Aorta (tissue), 5 donors: ENCODE measurements at regions of chr2 and their contacts with region 1.

Region 1: DNA sequence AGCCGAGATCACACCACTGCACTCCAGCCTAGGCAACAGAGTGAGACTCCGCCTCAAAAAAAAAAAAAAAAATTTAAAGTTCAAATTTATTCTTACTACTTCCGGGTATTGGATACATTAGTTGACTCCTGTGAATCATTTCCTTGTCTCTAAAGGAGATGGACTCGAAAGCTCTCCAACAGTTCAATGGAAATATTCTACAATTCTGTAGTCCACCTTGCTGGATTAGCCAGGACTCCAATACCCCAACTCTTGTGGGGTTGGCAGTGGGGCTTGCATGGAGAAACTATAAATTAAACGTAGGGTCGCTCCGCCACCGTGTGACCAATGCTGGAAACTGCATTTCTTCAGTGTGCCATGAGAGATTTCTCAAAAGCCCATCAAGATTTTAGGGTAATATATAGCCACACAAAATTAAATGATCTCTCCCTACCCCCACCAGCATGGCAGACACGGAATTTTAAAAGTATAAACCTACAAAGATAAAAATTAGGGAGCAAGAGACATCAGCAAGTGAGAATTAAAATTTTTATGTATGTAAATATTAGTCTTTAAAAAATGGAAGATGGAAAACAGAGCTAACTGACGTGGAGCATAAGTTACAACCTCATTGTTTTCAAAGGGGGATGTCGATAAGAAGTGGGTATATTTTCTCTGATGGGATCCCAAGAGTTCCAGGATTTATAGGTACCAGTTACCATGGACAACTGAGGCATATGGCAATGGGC is 27.8 kb upstream of the GAREM2 start:
- DNase-seq: peak; percentile 59 to 79
- ATAC-seq: peak; percentile 54
- H3K4me3 ChIP-seq: no peak overlapping the region
- H3K27ac ChIP-seq: no peak overlapping the region
- H3K4me1 ChIP-seq: no peaks in the 10 kb centered on the region
- H3K27me3 ChIP-seq: no peaks in the 10 kb centered on the region

Region 2: DNA sequence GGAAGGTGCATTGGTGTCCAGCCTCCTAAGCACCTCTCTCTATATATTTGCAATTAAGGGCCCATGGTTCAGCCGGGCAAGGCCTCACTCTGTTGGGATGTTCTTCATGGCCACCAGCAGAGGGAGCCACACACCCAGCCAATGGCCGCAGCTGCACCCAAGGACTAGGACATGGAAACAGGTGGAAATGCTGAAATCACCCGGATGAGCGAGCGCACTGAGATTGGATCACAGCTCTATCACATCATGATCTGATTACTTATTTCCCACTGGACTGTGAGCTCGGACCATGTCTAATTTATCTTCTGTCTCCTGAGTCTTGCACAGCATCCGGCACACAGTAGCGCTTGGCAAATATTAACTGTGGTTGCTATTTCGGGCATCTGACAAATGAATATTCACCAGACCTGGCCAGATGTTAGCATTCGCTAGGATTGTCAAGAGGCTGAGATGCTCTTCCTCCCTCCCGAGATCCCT is 194.0 kb before region 1 on chr2:
- intact Hi-C with region 1: loop called (anchors 2 to 5 kb)
- DNase-seq: peak; percentile 85 to 92
- ATAC-seq: peak; percentile 91
- H3K4me3 ChIP-seq: no peak overlapping the region
- H3K27ac ChIP-seq: no peak overlapping the region
- H3K4me1 ChIP-seq: no peaks in the 10 kb centered on the region
- H3K27me3 ChIP-seq: no peaks in the 10 kb centered on the region

Region 3: GRCh38 chr2:25991965-25992364 is 153.2 kb before region 1 on chr2:
- intact Hi-C with region 1: loop called (anchors 1 kb)
- DNase-seq: no peak
- ATAC-seq: no peak
- H3K4me3 ChIP-seq: no peak overlapping the region
- H3K27ac ChIP-seq: no peak overlapping the region
- H3K4me1 ChIP-seq: no peaks in the 10 kb centered on the region
- H3K27me3 ChIP-seq: no peaks in the 10 kb centered on the region

Region 4: GRCh38 chr2:26202981-26203490 is 57.9 kb after region 1 on chr2:
- intact Hi-C with region 1: no loop called
- DNase-seq: no peak
- ATAC-seq: no peak
- H3K4me3 ChIP-seq: no peak overlapping the region
- H3K27ac ChIP-seq: no peak overlapping the region
- H3K4me1 ChIP-seq: no peaks in the 10 kb centered on the region
- H3K27me3 ChIP-seq: no peaks in the 10 kb centered on the region

Region 5: DNA sequence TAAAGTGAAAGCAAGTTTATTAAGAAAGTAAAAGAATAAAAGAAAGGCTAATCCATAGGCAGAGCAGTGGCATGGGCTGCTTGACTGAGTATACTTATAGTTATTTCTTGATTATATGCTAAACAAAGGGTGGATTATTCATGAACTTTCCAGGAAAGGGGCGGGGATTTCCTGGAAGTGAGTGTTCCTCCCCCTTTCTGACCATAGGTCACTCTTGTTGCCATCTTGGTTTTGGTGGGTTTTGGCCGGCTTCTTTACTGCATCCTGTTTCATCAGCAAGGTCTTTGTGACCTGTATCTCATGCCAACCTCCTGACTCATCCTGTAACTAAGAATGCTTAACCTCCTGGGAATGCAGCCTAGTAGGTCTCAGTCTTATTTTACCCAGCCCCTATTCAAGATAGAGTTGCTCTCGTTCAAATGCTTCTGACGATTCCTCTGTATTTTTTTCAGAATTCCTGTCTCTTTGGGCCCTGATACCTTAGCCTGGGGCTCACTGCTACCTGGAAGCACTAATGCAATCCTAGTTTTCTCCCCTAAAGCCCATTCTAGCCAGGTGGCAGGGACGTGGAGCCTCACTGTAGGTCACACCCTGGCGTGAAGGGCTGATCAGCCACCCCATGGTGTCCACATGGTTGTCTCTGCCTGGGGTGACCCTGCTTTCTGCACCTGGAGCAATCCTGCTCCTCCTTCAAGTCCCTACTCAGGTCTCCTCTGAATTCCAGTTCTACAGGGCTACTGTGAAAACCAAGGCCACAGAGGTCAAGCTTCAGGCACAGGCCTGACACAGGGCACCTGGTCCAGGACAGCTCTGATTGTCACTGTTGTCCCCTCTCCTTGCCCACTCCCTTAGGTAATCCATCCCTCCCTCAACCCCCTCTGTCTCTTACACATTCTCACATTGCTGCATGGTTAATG is 613.0 kb after region 1 on chr2:
- intact Hi-C with region 1: no loop called
- DNase-seq: peak in 1 of 2 donors; percentile 82
- ATAC-seq: peak; percentile 51
- H3K4me3 ChIP-seq: no peak overlapping the region
- H3K27ac ChIP-seq: peak overlapping the region in 1 of 2 donors; percentile 23
- H3K4me1 ChIP-seq: no peaks in the 10 kb centered on the region
- H3K27me3 ChIP-seq: no peaks in the 10 kb centered on the region

Region 6: GRCh38 chr2:27776097-27776496 is 1631.0 kb after region 1 on chr2:
- intact Hi-C with region 1: no loop called
- DNase-seq: no peak
- ATAC-seq: no peak
- H3K4me3 ChIP-seq: no peak overlapping the region
- H3K27ac ChIP-seq: peak overlapping the region in 1 of 2 donors; percentile 83
- H3K4me1 ChIP-seq: peaks cover 10 to 12% of the 10 kb centered on the region in 2 donors
- H3K27me3 ChIP-seq: no peaks in the 10 kb centered on the region